MCF 10A (cell line): ENCODE measurements at regions of chr9 and their contacts with region 1.

Region 1: GRCh38 chr9:5886114-5886939 is 4.4 kb upstream of the MLANA start:
- DNase-seq: peak; percentile 78
- H3K4me3 Mint-ChIP-seq: no peak overlapping the region
- H3K27ac Mint-ChIP-seq: no peak overlapping the region
- H3K4me1 Mint-ChIP-seq: peaks cover 7% of the 10 kb centered on the region
- H3K27me3 Mint-ChIP-seq: peaks cover 16% of the 10 kb centered on the region
- CTCF ChIP-seq: peak; percentile 93

Region 2: DNA sequence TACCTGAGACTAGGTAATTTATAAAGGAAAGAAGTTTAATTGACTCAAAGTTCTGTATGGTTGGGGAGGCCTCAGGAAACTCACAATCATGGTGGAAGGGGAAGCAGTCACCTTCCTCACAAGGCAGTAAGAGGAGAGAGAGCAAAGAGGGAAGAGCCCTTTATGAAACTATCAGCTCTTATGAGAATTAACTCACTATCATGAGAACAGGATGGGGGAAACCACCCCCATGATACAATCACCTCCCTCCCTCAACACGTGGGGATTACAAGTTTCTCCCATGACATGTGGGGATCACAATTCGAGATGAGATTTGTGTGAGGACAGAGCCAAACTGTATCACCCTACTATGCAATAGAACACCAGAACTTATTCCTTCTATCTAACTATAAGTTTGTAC is 408.1 kb before region 1 on chr9:
- CTCF ChIA-PET with region 1: no interaction called
- POLR2A ChIA-PET with region 1: no interaction called
- intact Hi-C with region 1: no loop called
- DNase-seq: no peak
- H3K4me3 Mint-ChIP-seq: no peak overlapping the region
- H3K27ac Mint-ChIP-seq: no peak overlapping the region
- H3K4me1 Mint-ChIP-seq: no peaks in the 10 kb centered on the region
- H3K27me3 Mint-ChIP-seq: no peaks in the 10 kb centered on the region
- CTCF ChIP-seq: no peak

Region 3: GRCh38 chr9:5851445-5851844 is 34.9 kb before region 1 on chr9:
- CTCF ChIA-PET with region 1: interaction called, 11 read pairs
- POLR2A ChIA-PET with region 1: interaction called, 3 read pairs
- intact Hi-C with region 1: no loop called
- DNase-seq: peak; percentile 93
- H3K4me3 Mint-ChIP-seq: no peak overlapping the region
- H3K27ac Mint-ChIP-seq: peak overlapping the region; percentile 88
- H3K4me1 Mint-ChIP-seq: peaks cover 15% of the 10 kb centered on the region
- H3K27me3 Mint-ChIP-seq: no peaks in the 10 kb centered on the region
- CTCF ChIP-seq: no peak

Region 4: DNA sequence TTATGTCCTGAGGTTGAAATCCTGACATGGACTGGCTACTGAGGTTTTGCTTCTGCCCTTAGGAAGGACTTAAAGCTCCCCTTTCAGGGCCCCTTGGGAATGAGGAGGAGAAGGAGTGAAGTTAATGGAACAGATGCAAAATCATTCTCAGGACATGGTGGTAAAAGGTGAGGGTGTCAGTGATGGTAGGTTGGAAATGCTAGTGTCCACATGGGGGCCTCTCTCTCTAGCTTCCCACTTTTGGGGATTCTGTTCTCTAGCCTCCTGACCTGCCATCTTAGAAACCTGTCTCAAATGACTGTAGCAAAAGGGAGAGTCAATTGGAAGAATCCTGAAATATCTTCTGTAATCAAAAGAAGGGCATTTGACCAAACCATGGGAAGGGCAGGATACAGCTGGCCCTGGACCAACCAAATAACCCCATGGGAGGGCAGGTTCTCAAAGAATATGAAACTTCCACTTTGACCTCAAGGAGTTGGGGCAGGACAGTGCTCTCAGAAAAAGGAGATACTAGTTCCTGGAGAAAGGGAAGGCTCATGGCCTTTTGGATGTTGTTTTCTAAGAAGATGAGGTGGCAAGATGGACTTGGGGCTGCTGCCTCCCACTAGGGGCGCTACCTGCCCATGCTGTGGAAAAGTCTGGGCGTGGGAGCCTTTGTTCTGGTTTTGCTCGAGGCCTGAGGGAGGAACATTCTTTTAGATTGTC is 16.9 kb before region 1 on chr9:
- CTCF ChIA-PET with region 1: interaction called, 43 read pairs
- POLR2A ChIA-PET with region 1: no interaction called
- intact Hi-C with region 1: no loop called
- DNase-seq: peak; percentile 46
- H3K4me3 Mint-ChIP-seq: no peak overlapping the region
- H3K27ac Mint-ChIP-seq: no peak overlapping the region
- H3K4me1 Mint-ChIP-seq: peaks cover 12% of the 10 kb centered on the region
- H3K27me3 Mint-ChIP-seq: no peaks in the 10 kb centered on the region
- CTCF ChIP-seq: peak; percentile 41

Region 5: GRCh38 chr9:5920860-5921328 is 34.6 kb after region 1 on chr9:
- CTCF ChIA-PET with region 1: interaction called, 13 read pairs
- POLR2A ChIA-PET with region 1: interaction called, 3 read pairs
- intact Hi-C with region 1: no loop called
- DNase-seq: no peak
- H3K4me3 Mint-ChIP-seq: no peak overlapping the region
- H3K27ac Mint-ChIP-seq: no peak overlapping the region
- H3K4me1 Mint-ChIP-seq: no peaks in the 10 kb centered on the region
- H3K27me3 Mint-ChIP-seq: no peaks in the 10 kb centered on the region
- CTCF ChIP-seq: no peak

Region 6: DNA sequence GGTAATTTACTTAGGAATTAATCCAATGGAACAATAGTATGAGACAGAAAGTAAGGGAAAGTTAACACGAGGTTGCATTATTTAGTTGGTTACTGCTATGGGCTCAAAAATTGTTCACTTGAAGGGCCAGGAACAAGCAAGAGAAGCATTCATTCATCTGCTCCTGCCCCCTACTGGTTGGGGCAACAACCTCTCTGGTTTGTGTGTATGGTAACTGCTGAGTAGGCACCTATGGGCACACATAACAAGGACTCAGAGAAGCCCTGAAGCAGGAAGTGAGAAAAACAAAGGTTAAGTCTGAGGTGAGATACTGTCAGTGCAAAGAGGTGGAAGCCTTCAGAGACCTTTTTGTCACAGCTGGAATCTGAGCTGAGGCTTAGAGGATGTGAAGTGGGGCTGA is 163.5 kb after region 1 on chr9:
- CTCF ChIA-PET with region 1: interaction called, 76 read pairs
- POLR2A ChIA-PET with region 1: interaction called, 8 read pairs
- intact Hi-C with region 1: loop called (anchors 1 kb)
- DNase-seq: peak; percentile 56
- H3K4me3 Mint-ChIP-seq: no peak overlapping the region
- H3K27ac Mint-ChIP-seq: no peak overlapping the region
- H3K4me1 Mint-ChIP-seq: peaks cover 11% of the 10 kb centered on the region
- H3K27me3 Mint-ChIP-seq: no peaks in the 10 kb centered on the region
- CTCF ChIP-seq: peak; percentile 23

Region 7: DNA sequence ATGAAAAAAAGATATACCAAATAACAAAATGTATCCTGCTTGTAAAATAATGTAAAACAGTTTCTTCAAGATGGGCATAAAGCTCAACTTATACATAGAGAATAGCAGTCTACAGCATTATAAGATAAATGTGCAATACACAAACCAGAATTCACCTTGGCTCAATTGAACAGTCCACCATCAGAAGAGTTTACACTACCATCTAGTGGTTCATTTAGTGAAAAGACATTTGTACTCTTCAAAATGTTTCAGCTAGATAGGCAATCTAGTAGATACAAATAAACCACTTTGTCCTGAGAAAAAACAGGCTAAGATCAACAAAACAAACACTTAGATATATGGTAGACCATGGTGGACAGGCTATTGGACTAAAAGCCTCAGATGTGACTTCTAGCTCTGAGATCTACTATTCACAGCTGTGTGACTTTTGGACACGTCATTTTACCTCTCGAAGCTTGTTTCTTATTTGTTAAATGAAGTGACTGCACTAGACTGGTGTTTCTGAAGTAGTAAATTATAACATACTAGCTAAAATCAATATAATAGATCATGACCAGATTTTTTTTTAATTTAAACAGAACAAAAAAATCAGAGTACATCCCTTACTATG is 419.7 kb after region 1 on chr9:
- CTCF ChIA-PET with region 1: interaction called, 83 read pairs
- POLR2A ChIA-PET with region 1: no interaction called
- intact Hi-C with region 1: loop called (anchors 1 kb)
- DNase-seq: peak; percentile 59
- H3K4me3 Mint-ChIP-seq: no peak overlapping the region
- H3K27ac Mint-ChIP-seq: no peak overlapping the region
- H3K4me1 Mint-ChIP-seq: no peaks in the 10 kb centered on the region
- H3K27me3 Mint-ChIP-seq: no peaks in the 10 kb centered on the region
- CTCF ChIP-seq: peak; percentile 61